PC-9 (cell line): ENCODE measurements at regions of chr6 and their contacts with region 1.

Region 1: GRCh38 chr6:29752451-29753308 is 29.4 kb downstream of the HLA-F start:
- DNase-seq: peak; percentile 77 to 92
- H3K4me3 ChIP-seq: peak overlapping the region; percentile 52
- H3K27ac ChIP-seq: no peak overlapping the region
- H3K4me1 ChIP-seq: peaks cover 18% of the 10 kb centered on the region
- H3K27me3 ChIP-seq: no peaks in the 10 kb centered on the region
- CTCF ChIP-seq: peak; percentile 83

Region 2: GRCh38 chr6:29705389-29706231 is 47.1 kb before region 1 on chr6:
- CTCF ChIA-PET with region 1: no interaction called
- POLR2A ChIA-PET with region 1: no interaction called
- intact Hi-C with region 1: loop called (anchors 1 kb)
- DNase-seq: peak in 1 of 2 experiments; percentile 47
- H3K4me3 ChIP-seq: no peak overlapping the region
- H3K27ac ChIP-seq: no peak overlapping the region
- H3K4me1 ChIP-seq: no peaks in the 10 kb centered on the region
- H3K27me3 ChIP-seq: peaks cover 11% of the 10 kb centered on the region; the same call in 1 of the 2 replicates
- CTCF ChIP-seq: peak; percentile 74

Region 3: DNA sequence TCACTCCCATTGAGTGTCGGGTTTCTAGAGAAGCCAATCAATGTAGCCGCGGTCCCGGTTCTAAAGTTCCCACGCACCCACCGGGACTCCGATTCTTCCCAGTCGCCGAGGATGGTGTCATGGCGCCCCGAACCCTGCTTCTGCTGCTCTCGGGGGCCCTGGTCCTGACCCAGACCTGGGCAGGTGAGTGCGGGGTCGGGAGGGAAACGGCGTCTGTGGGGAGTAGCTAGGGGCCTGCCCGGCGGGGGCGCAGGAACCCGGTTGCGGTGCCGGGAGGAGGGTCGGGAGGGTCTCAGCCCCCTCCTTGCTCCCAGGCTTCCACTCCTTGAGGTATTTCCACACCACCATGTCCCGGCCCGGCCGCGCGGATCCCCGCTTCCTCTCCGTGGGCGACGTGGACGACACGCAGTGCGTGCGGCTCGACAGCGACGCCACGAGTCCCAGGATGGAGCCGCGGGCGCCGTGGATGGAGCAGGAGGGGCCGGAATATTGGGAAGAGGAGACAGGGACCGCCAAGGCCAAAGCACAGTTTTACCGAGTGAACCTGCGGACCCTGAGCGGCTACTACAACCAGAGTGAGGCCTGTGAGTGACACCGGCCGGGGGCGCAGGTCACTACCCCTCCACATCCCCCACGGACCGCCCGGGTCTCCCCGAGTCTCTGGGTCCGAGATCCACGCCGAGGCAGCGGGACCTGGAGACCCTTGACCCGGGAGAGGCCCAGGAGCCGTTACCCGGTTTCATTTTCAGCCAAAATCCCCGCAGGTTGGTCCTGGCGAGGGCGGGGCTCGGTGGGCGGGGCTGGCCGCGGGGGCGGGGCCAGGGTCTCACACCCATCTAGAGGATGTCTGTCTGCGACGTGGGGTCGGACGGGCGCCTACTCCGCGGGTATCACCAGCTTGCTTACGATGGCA is 39.7 kb after region 1 on chr6:
- CTCF ChIA-PET with region 1: interaction called, 4 read pairs
- POLR2A ChIA-PET with region 1: interaction called, 3 read pairs
- intact Hi-C with region 1: loop called (anchors 1 kb)
- DNase-seq: peak in 1 of 2 experiments; percentile 69
- H3K4me3 ChIP-seq: peak overlapping the region; percentile 75
- H3K27ac ChIP-seq: peak overlapping the region; percentile 89
- H3K4me1 ChIP-seq: peaks cover 30% of the 10 kb centered on the region
- H3K27me3 ChIP-seq: no peaks in the 10 kb centered on the region
- CTCF ChIP-seq: peak; percentile 67

Region 4: GRCh38 chr6:29834564-29835436 is 82.1 kb after region 1 on chr6:
- CTCF ChIA-PET with region 1: no interaction called
- POLR2A ChIA-PET with region 1: no interaction called
- intact Hi-C with region 1: loop called (anchors 5 kb)
- DNase-seq: peak in 1 of 2 experiments; percentile 56
- H3K4me3 ChIP-seq: no peak overlapping the region
- H3K27ac ChIP-seq: no peak overlapping the region
- H3K4me1 ChIP-seq: no peaks in the 10 kb centered on the region
- H3K27me3 ChIP-seq: peaks cover 5% of the 10 kb centered on the region; the same call in 1 of the 2 replicates
- CTCF ChIP-seq: peak; percentile 93

Region 5: GRCh38 chr6:29917857-29918256 is 165.2 kb after region 1 on chr6:
- CTCF ChIA-PET with region 1: no interaction called
- POLR2A ChIA-PET with region 1: no interaction called
- intact Hi-C with region 1: no loop called
- DNase-seq: no peak
- H3K4me3 ChIP-seq: no peak overlapping the region
- H3K27ac ChIP-seq: no peak overlapping the region
- H3K4me1 ChIP-seq: no peaks in the 10 kb centered on the region
- H3K27me3 ChIP-seq: no peaks in the 10 kb centered on the region
- CTCF ChIP-seq: no peak